ENCODE measurements at regions of chr3 and their contacts with region 1.

Region 1: GRCh38 chr3:141412087-141412935 is 44.0 kb downstream of the ZBTB38 start:
- DNase-seq: peak; percentile 66 to 76 (median 72)
- H3K4me3 ChIP-seq: peak overlapping the region in 1 of 2 donors; percentile 21
- H3K4me3 Mint-ChIP-seq: peak overlapping the region; percentile 67 to 90 (median 86)
- H3K27ac ChIP-seq: peak overlapping the region; percentile 77
- H3K27ac Mint-ChIP-seq: peak overlapping the region; percentile 94 to 100 (median 99)
- H3K4me1 ChIP-seq: peaks cover 71% of the 10 kb centered on the region
- H3K4me1 Mint-ChIP-seq: peaks cover 57 to 85% (median 73%) of the 10 kb centered on the region in 4 donors
- H3K27me3 ChIP-seq: no peaks in the 10 kb centered on the region
- H3K27me3 Mint-ChIP-seq: no peaks in the 10 kb centered on the region

Region 2: DNA sequence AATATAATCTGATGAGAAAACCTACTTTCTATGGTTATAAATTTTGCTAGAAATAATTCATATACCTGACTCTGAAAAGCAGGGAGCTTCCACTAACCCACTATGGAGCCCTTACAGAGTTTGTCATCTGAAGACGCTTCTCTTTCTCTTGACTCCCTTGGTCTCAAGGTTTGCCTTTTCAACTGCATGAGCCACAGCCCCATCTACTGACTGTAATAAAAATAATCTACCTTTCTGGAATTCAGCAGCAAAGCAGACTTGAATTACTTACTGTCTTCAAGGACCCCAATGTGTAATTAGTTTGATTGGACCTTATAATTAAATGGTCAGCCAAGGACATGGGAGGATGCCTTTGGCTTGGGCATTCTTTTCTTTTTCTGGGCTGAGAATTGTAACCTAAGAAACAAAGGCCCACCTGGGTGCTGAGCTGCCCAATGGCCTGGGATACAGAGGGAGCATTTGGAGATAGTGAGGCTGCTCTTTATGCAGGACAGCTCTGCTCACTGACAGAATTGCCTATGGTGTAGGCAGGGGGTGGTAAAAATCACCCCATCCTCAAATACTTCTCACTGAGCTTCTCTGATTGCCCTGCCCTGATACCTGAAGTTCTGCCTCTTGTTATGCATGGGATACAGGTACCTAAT is 913.1 kb before region 1 on chr3:
- CTCF ChIA-PET with region 1: no interaction called
- POLR2A ChIA-PET with region 1: no interaction called
- intact Hi-C with region 1: no loop called
- DNase-seq: no peak
- H3K4me3 ChIP-seq: no peak overlapping the region
- H3K4me3 Mint-ChIP-seq: no peak overlapping the region
- H3K27ac ChIP-seq: no peak overlapping the region
- H3K27ac Mint-ChIP-seq: no peak overlapping the region
- H3K4me1 ChIP-seq: no peaks in the 10 kb centered on the region
- H3K4me1 Mint-ChIP-seq: no peaks in the 10 kb centered on the region
- H3K27me3 ChIP-seq: no peaks in the 10 kb centered on the region
- H3K27me3 Mint-ChIP-seq: peaks cover 0 to 1% of the 10 kb centered on the region in 2 donors

Region 3: DNA sequence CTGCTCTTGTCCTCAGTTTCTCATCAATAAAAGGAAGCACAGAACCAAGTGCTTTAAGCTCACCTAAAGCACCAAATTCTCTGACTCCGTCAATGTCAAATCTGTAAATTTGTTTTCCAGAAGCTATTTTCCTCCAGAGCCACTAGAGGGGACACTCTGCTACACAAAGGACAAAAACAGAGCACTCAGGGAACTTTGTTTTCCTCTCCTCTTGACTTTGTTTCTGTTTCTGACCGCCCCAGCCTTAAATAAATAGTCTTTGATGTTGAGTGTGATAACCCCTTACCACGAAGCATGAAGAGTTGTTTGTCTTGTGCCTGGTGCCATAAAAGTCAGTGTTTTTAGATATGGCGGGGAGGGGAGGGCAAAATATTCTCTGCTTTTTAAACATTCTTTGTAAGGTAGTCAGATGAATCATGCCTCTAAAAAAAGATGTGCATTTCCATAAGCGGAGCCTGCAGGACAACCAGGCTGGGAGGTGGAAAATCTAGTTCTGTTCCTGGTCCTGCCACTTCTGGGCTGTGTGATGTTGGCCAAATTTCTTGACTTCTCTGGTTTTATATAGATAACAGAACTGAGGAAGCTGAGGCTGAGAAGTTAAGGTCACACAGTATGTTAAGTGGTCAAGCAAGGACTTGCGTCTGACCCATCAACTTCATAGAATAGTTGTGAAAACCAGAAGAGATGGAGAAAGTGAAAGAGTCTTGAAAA is 51.3 kb before region 1 on chr3:
- CTCF ChIA-PET with region 1: interaction called, 8 read pairs
- POLR2A ChIA-PET with region 1: interaction called, 13 read pairs
- intact Hi-C with region 1: no loop called
- DNase-seq: peak in 4 of 5 donors; percentile 46 to 60 (median 50)
- H3K4me3 ChIP-seq: no peak overlapping the region
- H3K4me3 Mint-ChIP-seq: peak overlapping the region in 6 of 8 donors; percentile 11 to 69 (median 50)
- H3K27ac ChIP-seq: no peak overlapping the region
- H3K27ac Mint-ChIP-seq: peak overlapping the region in 2 of 7 donors; percentile 7 to 39
- H3K4me1 ChIP-seq: peaks cover 10% of the 10 kb centered on the region
- H3K4me1 Mint-ChIP-seq: peaks cover 3 to 8% (median 7%) of the 10 kb centered on the region in 4 donors
- H3K27me3 ChIP-seq: no peaks in the 10 kb centered on the region
- H3K27me3 Mint-ChIP-seq: peaks cover 2 to 5% of the 10 kb centered on the region in 2 donors

Region 4: DNA sequence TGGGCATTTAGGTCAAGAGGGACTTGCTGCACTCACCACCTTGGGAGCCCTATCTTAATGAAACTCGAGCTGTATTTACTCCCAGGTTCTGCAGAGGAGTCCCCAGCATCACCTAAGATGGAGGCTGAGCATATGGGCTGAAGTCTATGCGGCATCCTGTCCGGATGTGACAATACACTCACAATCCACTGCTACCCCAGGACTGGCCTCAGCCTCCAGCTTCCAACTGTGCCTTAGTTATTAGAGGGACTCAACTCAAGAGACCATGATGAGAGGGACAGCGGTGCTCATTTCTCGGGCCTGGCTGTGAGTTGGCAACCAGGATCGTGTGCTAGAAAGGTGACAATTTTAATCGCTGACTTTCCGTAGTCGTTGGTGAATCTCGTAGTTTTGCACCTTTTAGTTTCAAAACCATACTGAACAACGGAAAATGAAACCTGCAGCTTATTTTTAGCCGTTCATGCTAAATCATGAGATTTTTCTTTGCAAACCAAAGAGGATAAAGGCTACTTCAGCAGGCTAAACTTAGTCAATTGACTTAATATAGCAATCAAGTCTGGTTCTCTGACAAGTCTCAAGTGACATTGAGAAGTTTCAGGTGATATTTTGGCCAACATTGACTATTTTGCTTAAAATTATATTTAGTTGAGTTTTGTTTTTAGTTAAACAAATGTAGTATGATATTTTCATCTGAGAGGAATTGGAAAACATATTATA is 32.9 kb before region 1 on chr3:
- CTCF ChIA-PET with region 1: interaction called, 13 read pairs
- POLR2A ChIA-PET with region 1: interaction called, 196 read pairs
- intact Hi-C with region 1: no loop called
- DNase-seq: peak; percentile 30 to 50 (median 44)
- H3K4me3 ChIP-seq: peak overlapping the region in 1 of 2 donors; percentile 18
- H3K4me3 Mint-ChIP-seq: peak overlapping the region; percentile 49 to 86 (median 74)
- H3K27ac ChIP-seq: peak overlapping the region; percentile 33
- H3K27ac Mint-ChIP-seq: peak overlapping the region; percentile 85 to 97 (median 96)
- H3K4me1 ChIP-seq: peaks cover 51% of the 10 kb centered on the region
- H3K4me1 Mint-ChIP-seq: peaks cover 29 to 47% (median 39%) of the 10 kb centered on the region in 4 donors
- H3K27me3 ChIP-seq: no peaks in the 10 kb centered on the region
- H3K27me3 Mint-ChIP-seq: no peaks in the 10 kb centered on the region

Region 5: DNA sequence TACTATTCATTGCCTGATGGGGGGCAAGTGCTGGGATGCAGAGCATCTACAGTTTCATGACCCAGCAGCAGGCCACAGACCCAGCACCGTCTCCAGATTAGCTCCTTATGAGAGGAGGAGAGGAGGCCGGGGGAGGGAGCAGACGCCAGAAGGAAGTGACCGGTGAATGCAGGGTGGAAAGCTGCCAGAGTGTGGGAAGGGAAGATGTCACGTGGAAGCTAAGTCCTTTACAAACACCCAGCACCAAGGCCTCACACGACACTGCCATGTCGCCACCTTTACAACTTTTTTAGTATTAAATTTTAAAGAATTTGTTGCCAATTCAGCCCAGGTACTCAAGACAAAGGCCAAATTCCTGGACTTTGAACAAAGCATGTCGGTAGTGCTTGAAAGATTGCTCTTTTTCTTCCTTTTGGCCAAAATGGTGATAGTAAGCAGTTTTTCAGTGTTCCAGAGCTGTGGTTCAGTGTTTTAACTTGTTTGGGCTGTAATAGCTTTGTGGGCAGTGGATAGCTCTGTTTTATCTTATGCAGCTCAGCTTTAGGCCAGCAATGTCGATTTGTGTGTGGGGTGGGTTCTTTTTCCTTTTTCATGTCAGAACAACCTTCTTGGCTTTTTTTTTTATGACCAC is 14.2 kb after region 1 on chr3:
- CTCF ChIA-PET with region 1: interaction called, 17 read pairs
- POLR2A ChIA-PET with region 1: interaction called, 18 read pairs
- intact Hi-C with region 1: no loop called
- DNase-seq: no peak
- H3K4me3 ChIP-seq: no peak overlapping the region
- H3K4me3 Mint-ChIP-seq: no peak overlapping the region
- H3K27ac ChIP-seq: no peak overlapping the region
- H3K27ac Mint-ChIP-seq: peak overlapping the region in 6 of 7 donors; percentile 16 to 74 (median 50)
- H3K4me1 ChIP-seq: peaks cover 27% of the 10 kb centered on the region
- H3K4me1 Mint-ChIP-seq: peaks cover 8 to 48% (median 35%) of the 10 kb centered on the region in 4 donors
- H3K27me3 ChIP-seq: no peaks in the 10 kb centered on the region
- H3K27me3 Mint-ChIP-seq: no peaks in the 10 kb centered on the region

Region 6: GRCh38 chr3:141875374-141875892 is 463.1 kb after region 1 on chr3:
- CTCF ChIA-PET with region 1: no interaction called
- POLR2A ChIA-PET with region 1: no interaction called
- intact Hi-C with region 1: loop called (anchors 5 kb)
- DNase-seq: peak; percentile 75 to 84 (median 78)
- H3K4me3 ChIP-seq: peak overlapping the region; percentile 82 to 86
- H3K4me3 Mint-ChIP-seq: peak overlapping the region; percentile 85 to 96 (median 92)
- H3K27ac ChIP-seq: peak overlapping the region; percentile 95
- H3K27ac Mint-ChIP-seq: peak overlapping the region; percentile 93 to 99 (median 95)
- H3K4me1 ChIP-seq: peaks cover 28% of the 10 kb centered on the region
- H3K4me1 Mint-ChIP-seq: peaks cover 19 to 39% (median 30%) of the 10 kb centered on the region in 4 donors
- H3K27me3 ChIP-seq: no peaks in the 10 kb centered on the region
- H3K27me3 Mint-ChIP-seq: peaks cover 0 to 1% of the 10 kb centered on the region in 2 donors

Measured in CD4-positive, alpha-beta memory T cell (primary cell).